ENCODE measurements at regions of chr1 and their contacts with region 1.

Region 1: DNA sequence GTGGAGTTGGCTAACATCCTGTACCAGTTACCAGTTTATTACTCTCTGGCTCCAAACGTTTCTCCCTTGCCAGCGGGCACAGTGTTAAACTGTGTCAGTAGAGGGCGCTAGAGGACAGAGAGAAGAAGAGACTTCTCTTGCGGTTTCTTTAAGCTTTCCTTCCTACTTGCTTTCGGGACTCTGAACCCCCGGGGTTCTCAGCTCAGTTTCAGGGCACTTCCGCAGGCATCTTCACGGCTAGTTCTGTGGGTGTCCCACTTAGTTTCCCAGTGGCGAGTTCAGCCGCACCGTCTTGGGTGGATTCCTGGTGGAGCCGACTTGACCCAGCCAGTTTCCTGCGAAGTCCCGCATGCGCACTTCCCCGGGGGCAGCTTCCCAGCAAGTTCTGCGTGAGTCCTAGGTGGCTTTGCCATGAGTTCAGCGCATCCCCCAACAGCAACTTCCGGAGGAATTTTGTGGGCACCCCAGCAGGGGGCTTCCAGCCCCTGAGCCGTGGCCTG is 37.9 kb upstream of the BTG2 start:
- DNase-seq: peak; percentile 49 to 89 (median 84)
- ATAC-seq: peak; percentile 80
- H3K4me3 ChIP-seq: peak overlapping the region; percentile 82
- H3K4me3 Mint-ChIP-seq: peak overlapping the region; percentile 76 to 94 (median 90)
- H3K27ac ChIP-seq: peak overlapping the region; percentile 86
- H3K27ac Mint-ChIP-seq: peak overlapping the region in 8 of 9 donors; percentile 80 to 95 (median 92)
- H3K4me1 ChIP-seq: peaks cover 10 to 26% of the 10 kb centered on the region in 2 donors
- H3K4me1 Mint-ChIP-seq: peaks cover 12 to 27% (median 24%) of the 10 kb centered on the region in 7 donors
- H3K27me3 ChIP-seq: no peaks in the 10 kb centered on the region
- H3K27me3 Mint-ChIP-seq: peaks cover 0 to 14% (median 0%) of the 10 kb centered on the region in 5 donors

Region 2: GRCh38 chr1:203038891-203039608 is 228.3 kb before region 1 on chr1:
- CTCF ChIA-PET with region 1: interaction called, 18 read pairs
- POLR2A ChIA-PET with region 1: interaction called, 4 read pairs
- intact Hi-C with region 1: loop called (anchors 1 kb)
- DNase-seq: peak; percentile 19 to 65 (median 56)
- ATAC-seq: peak; percentile 90
- H3K4me3 ChIP-seq: no peak overlapping the region
- H3K4me3 Mint-ChIP-seq: peak overlapping the region in 1 of 10 donors; percentile 44
- H3K27ac ChIP-seq: no peak overlapping the region
- H3K27ac Mint-ChIP-seq: no peak overlapping the region
- H3K4me1 ChIP-seq: no peaks in the 10 kb centered on the region
- H3K4me1 Mint-ChIP-seq: peaks cover 3 to 15% (median 5%) of the 10 kb centered on the region in 7 donors
- H3K27me3 ChIP-seq: no peaks in the 10 kb centered on the region
- H3K27me3 Mint-ChIP-seq: peaks cover 0 to 7% (median 4%) of the 10 kb centered on the region in 5 donors

Region 3: DNA sequence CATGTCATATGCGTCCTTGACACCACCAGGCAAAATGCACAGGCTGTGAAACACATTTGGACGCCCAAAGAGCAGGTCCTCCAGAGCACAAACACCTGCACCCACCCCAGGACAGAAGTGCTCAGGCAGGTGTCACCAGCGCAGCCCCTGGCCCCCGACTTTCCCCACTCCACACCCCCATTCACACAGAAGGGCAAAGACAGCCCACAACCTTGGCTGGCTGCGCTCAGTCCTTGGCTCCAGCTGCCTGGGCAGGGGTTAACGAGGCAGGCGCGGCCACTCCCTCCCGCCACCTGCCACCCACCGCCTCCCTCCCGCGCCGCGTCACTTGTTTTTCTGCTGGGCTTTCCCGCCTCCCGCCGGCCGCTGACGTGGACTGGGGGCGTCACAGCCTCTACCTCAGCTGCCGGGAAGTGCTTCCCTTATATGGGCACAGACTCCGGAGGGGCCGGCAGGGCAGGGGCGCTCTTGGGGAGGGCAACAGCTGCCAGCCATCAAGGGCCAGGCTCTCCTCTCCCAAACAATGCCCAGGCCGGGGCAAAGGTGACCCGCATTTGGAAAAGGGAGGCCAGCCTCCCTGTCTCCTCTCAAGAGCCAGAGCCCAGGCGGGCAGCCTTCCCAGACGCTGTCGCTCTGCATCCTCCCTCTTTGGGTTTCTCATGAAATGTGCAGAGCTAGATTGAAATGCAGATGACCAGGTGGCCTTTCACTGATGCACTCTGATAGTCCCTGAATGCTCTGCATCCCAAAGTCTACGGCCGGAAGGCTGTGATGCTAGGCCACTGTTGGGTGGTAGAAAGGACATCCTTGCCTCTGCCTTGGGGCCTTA is 23.1 kb after region 1 on chr1:
- CTCF ChIA-PET with region 1: interaction called, 122 read pairs
- POLR2A ChIA-PET with region 1: interaction called, 389 read pairs
- intact Hi-C with region 1: loop called in 1 of 2 experiments (anchors 2 kb)
- DNase-seq: peak; percentile 95 to 98 (median 97)
- ATAC-seq: peak; percentile 76
- H3K4me3 ChIP-seq: peak overlapping the region; percentile 57
- H3K4me3 Mint-ChIP-seq: peak overlapping the region; percentile 75 to 89 (median 86)
- H3K27ac ChIP-seq: peak overlapping the region; percentile 98
- H3K27ac Mint-ChIP-seq: peak overlapping the region; percentile 97 to 100 (median 99)
- H3K4me1 ChIP-seq: peaks cover 54 to 58% of the 10 kb centered on the region in 2 donors
- H3K4me1 Mint-ChIP-seq: peaks cover 44 to 92% (median 86%) of the 10 kb centered on the region in 7 donors
- H3K27me3 ChIP-seq: no peaks in the 10 kb centered on the region
- H3K27me3 Mint-ChIP-seq: peaks cover 0 to 3% (median 0%) of the 10 kb centered on the region in 5 donors

Region 4: DNA sequence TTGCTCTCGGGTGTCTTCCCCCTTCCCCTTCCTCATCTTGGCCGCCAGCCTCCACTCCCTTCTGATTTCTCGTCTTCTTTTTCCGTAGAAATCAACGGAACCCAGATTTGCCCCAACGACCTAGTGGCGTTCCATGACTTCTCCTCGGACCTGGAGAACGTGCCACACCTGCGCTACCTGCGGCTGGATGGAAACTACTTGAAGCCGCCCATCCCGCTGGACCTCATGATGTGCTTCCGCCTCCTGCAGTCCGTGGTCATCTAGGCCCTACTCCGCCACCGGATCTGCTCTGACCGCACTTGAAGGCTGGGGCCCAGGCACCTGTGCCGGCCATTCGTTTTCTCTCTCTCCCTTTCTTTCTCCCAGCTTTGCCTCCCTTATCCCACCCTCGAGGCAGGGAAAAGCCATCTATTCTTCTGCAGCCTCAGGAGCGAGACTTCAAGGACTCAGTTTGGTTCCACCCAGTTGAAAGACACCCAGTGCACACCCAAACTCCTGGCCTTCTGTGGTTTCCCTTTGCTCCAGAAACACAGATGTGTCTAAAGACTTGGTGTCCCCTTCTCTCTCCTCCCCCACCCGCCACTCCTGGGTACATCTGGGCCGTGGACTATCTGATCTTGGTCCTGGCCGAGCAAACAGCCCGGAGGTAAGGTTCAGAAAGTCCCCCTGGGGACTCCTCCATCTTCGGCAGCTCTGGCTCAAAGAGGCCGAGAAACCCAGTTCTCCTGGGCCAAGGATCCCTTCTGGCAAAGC is 219.4 kb after region 1 on chr1:
- CTCF ChIA-PET with region 1: interaction called, 201 read pairs
- POLR2A ChIA-PET with region 1: interaction called, 16 read pairs
- intact Hi-C with region 1: loop called (anchors 1 kb)
- DNase-seq: peak in 1 of 9 donors; percentile 5
- ATAC-seq: no peak
- H3K4me3 ChIP-seq: no peak overlapping the region
- H3K4me3 Mint-ChIP-seq: peak overlapping the region; percentile 58 to 84 (median 79)
- H3K27ac ChIP-seq: no peak overlapping the region
- H3K27ac Mint-ChIP-seq: peak overlapping the region; percentile 9 to 80 (median 72)
- H3K4me1 ChIP-seq: peaks cover 7 to 9% of the 10 kb centered on the region in 2 donors
- H3K4me1 Mint-ChIP-seq: peaks cover 0 to 20% (median 5%) of the 10 kb centered on the region in 7 donors
- H3K27me3 ChIP-seq: no peaks in the 10 kb centered on the region
- H3K27me3 Mint-ChIP-seq: peaks cover 0 to 5% (median 0%) of the 10 kb centered on the region in 5 donors

Region 5: DNA sequence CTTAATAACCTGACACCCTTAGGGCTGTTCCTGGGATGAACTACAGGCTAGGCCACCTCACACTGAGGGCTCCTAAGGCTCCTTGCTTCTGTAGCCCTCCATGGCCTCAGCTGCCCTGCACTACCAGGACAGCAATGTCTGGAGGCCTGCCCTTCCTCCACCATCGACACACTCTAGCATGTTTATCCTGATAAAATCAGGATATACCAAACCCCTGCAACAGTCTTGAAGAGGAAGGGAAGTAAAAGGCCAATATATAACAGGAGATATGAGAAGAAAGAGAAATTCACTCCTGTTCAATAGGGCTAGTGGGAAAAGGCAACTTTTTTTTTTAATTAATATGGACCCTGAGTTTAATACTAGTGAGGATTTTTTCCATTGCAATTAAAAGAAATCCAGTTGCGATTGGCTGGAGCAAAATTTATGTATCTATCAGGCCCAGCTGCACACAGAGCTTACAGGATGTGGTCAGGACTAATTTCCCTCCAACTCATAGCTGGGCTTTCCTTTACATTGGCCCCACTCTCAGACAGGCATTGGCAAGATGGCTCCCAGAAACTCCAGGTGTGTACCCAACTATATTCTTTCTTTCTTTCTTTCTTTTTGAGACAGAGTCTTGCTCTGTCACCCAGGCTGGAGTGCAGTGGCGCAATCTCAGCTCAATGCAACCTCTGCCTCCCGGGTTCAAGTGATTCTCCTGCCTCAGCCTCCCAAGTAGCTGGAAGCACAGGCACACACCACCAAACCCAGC is 345.7 kb after region 1 on chr1:
- CTCF ChIA-PET with region 1: interaction called, 5 read pairs
- POLR2A ChIA-PET with region 1: no interaction called
- intact Hi-C with region 1: loop called in 1 of 2 experiments (anchors 5 kb)
- DNase-seq: no peak
- ATAC-seq: no peak
- H3K4me3 ChIP-seq: no peak overlapping the region
- H3K4me3 Mint-ChIP-seq: peak overlapping the region in 1 of 10 donors; percentile 49
- H3K27ac ChIP-seq: no peak overlapping the region
- H3K27ac Mint-ChIP-seq: peak overlapping the region in 2 of 9 donors; percentile 58 to 76
- H3K4me1 ChIP-seq: peaks cover 0 to 6% of the 10 kb centered on the region in 2 donors
- H3K4me1 Mint-ChIP-seq: peaks cover 12 to 68% (median 18%) of the 10 kb centered on the region in 7 donors
- H3K27me3 ChIP-seq: no peaks in the 10 kb centered on the region
- H3K27me3 Mint-ChIP-seq: no peaks in the 10 kb centered on the region

Region 6: GRCh38 chr1:204128964-204129896 is 861.8 kb after region 1 on chr1:
- CTCF ChIA-PET with region 1: no interaction called
- POLR2A ChIA-PET with region 1: no interaction called
- intact Hi-C with region 1: loop called (anchors 5 kb)
- DNase-seq: peak; percentile 19 to 70 (median 48)
- ATAC-seq: peak; percentile 84
- H3K4me3 ChIP-seq: no peak overlapping the region
- H3K4me3 Mint-ChIP-seq: peak overlapping the region in 5 of 10 donors; percentile 13 to 47 (median 24)
- H3K27ac ChIP-seq: no peak overlapping the region
- H3K27ac Mint-ChIP-seq: peak overlapping the region in 1 of 9 donors; percentile 48
- H3K4me1 ChIP-seq: no peaks in the 10 kb centered on the region
- H3K4me1 Mint-ChIP-seq: peaks cover 0 to 12% (median 9%) of the 10 kb centered on the region in 7 donors
- H3K27me3 ChIP-seq: no peaks in the 10 kb centered on the region
- H3K27me3 Mint-ChIP-seq: no peaks in the 10 kb centered on the region